ENCODE measurements at regions of chr11 and their contacts with region 1.

Region 1: GRCh38 chr11:10540923-10541560 is at the start of gene RNF141:
- DNase-seq: peak; percentile 99
- ATAC-seq: peak; percentile 91
- H3K4me3 Mint-ChIP-seq: peak within 1 kb of the TSS; percentile 90
- H3K27ac Mint-ChIP-seq: peak within 1 kb of the TSS; percentile 95
- H3K4me1 Mint-ChIP-seq: peaks cover 80% of the 10 kb centered on the region
- H3K27me3 Mint-ChIP-seq: no peaks in the 10 kb centered on the region
- CTCF ChIP-seq: no peak
- total RNA-seq, gene RNF141: 32.8 and 36.9 TPM in 2 replicates

Region 2: GRCh38 chr11:10263929-10264328 is 277.1 kb before region 1 on chr11:
- CTCF ChIA-PET with region 1: no interaction called
- POLR2A ChIA-PET with region 1: no interaction called
- intact Hi-C with region 1: no loop called
- DNase-seq: no peak
- ATAC-seq: no peak
- H3K4me3 Mint-ChIP-seq: no peak overlapping the region
- H3K27ac Mint-ChIP-seq: no peak overlapping the region
- H3K4me1 Mint-ChIP-seq: peaks cover 3% of the 10 kb centered on the region
- H3K27me3 Mint-ChIP-seq: no peaks in the 10 kb centered on the region
- CTCF ChIP-seq: no peak

Region 3: GRCh38 chr11:10450464-10451425 is 90.3 kb before region 1 on chr11:
- CTCF ChIA-PET with region 1: interaction called, 7 read pairs
- POLR2A ChIA-PET with region 1: interaction called, 37 read pairs
- intact Hi-C with region 1: no loop called
- DNase-seq: peak; percentile 64
- ATAC-seq: peak; percentile 40
- H3K4me3 Mint-ChIP-seq: peak overlapping the region; percentile 90
- H3K27ac Mint-ChIP-seq: peak overlapping the region; percentile 94
- H3K4me1 Mint-ChIP-seq: peaks cover 60% of the 10 kb centered on the region
- H3K27me3 Mint-ChIP-seq: no peaks in the 10 kb centered on the region
- CTCF ChIP-seq: no peak

Region 4: DNA sequence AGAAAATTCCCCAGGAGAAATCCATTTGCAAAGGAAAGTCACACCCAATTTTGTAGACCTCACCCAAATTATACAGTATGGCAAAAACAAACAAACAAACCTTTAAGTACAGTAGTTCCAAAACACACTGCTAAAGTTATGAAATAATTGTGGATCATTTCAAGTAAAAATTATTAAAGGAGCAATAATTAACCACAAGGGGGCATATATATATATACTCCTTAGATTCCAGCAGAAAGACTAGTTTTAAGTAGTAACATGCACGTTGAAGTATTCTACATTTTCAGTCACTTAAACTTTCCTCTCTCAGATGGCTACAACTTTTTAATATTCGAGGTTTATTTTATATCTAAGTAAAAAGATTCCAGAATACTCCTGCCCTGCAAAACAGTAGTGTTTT is 26.8 kb before region 1 on chr11:
- CTCF ChIA-PET with region 1: interaction called, 10 read pairs
- POLR2A ChIA-PET with region 1: interaction called, 8 read pairs
- intact Hi-C with region 1: no loop called
- DNase-seq: no peak
- ATAC-seq: no peak
- H3K4me3 Mint-ChIP-seq: no peak overlapping the region
- H3K27ac Mint-ChIP-seq: no peak overlapping the region
- H3K4me1 Mint-ChIP-seq: peaks cover 16% of the 10 kb centered on the region
- H3K27me3 Mint-ChIP-seq: no peaks in the 10 kb centered on the region
- CTCF ChIP-seq: no peak

Region 5: GRCh38 chr11:10573556-10573955 is 32.5 kb after region 1 on chr11:
- CTCF ChIA-PET with region 1: interaction called, 7 read pairs
- POLR2A ChIA-PET with region 1: interaction called, 3 read pairs
- intact Hi-C with region 1: loop called (anchors 5 kb)
- DNase-seq: no peak
- ATAC-seq: no peak
- H3K4me3 Mint-ChIP-seq: no peak overlapping the region
- H3K27ac Mint-ChIP-seq: no peak overlapping the region
- H3K4me1 Mint-ChIP-seq: peaks cover 64% of the 10 kb centered on the region
- H3K27me3 Mint-ChIP-seq: no peaks in the 10 kb centered on the region
- CTCF ChIP-seq: no peak

Region 6: DNA sequence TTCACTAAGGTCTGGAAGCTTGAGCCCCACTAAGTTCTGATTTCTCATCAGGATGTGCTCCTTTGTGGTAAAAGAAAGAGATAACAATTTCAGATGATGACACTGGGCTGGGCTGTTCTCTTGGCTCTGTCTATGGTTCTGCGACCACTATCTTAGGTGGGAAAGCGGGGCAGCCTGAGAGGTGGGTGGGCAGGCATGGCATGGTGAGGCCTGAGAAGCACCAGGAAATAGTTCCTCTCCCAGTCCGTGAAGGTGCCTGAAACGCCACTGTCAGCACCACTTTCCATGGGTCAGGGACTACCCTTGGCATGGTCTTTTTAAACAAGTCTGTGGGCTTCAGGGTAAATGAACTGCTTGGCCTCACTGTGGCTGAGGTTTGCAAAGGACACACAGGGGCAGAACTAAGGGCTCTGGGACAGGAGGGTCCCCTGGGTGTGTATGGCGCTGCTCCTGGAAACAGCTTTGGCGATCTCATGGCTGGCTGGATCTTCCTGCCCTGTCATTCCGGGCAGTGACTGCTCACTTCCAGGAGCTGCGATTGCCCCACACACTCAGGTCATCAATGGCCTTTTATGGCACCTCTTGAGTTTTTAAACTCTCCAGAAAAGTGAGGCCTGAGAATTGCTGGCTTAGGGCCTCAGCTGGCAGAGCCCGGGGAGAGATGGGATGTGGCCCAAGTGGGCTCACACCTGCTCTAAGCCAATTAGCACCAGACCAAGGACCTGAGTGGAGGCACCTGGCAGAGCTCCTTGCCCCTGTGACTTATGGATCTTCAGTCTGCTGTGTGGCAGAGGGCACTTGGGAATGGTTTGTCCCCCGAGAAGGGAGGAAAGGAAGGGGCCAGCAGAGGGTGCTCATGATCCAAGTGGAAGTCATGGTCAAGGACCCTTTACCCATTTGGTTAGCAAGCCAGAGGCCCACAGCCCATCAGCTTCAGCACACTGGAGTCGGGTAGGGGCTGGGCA is 83.0 kb after region 1 on chr11:
- CTCF ChIA-PET with region 1: interaction called, 5 read pairs
- POLR2A ChIA-PET with region 1: interaction called, 16 read pairs
- intact Hi-C with region 1: no loop called
- DNase-seq: no peak
- ATAC-seq: peak; percentile 9
- H3K4me3 Mint-ChIP-seq: no peak overlapping the region
- H3K27ac Mint-ChIP-seq: peak overlapping the region; percentile 95
- H3K4me1 Mint-ChIP-seq: peaks cover 77% of the 10 kb centered on the region
- H3K27me3 Mint-ChIP-seq: no peaks in the 10 kb centered on the region
- CTCF ChIP-seq: no peak

Region 7: GRCh38 chr11:10646482-10647355 is 105.7 kb after region 1 on chr11:
- CTCF ChIA-PET with region 1: interaction called, 11 read pairs
- POLR2A ChIA-PET with region 1: interaction called, 20 read pairs
- intact Hi-C with region 1: loop called (anchors 1 kb)
- DNase-seq: no peak
- ATAC-seq: no peak
- H3K4me3 Mint-ChIP-seq: no peak overlapping the region
- H3K27ac Mint-ChIP-seq: peak overlapping the region; percentile 50
- H3K4me1 Mint-ChIP-seq: peaks cover 78% of the 10 kb centered on the region
- H3K27me3 Mint-ChIP-seq: no peaks in the 10 kb centered on the region
- CTCF ChIP-seq: no peak

Region 8: DNA sequence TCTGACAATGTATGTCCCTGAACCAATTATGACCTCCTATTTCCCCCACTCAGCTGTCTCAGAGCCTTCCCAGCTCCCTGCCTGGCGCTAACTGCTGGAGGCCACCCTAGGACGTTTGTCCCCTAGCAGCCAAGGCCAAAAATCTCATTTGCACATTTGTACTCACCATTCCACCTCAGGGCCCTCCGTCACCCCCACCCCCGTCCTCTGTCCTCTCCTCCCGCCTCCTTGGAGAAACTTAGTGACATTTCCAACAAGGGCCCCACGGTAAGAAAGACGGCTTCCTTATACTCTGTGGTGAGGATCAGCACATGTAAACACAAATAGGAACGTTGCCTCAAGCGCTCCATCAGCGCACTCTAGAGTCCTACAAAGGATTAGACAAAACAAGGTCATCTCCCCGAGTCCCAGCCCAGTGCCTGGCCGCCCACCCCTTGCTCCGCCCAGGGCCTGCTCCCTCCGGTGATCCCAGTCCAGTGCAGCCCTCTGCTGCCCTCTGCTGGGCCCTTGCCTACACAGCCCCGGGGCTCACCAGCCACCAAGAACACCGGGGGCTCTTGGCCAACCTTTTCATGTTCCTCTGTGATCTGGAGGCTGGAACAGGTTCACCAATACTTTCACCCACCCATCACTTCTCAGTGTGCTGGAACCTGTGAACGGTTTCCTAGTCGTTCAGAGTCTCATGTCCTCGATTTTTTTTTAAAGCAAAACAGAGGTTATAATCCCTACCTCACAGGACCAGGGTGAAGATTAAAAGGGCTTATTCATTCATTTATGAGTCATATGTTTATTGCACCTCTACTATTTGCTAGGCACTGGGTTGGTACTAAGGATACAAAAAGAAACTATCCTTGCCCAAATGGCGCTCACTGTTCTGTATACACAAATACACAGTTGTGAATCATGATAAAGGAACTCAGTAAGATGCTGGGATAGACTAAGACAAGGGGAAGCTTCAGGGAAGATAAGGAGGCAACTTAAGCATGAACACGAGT is 194.7 kb after region 1 on chr11:
- CTCF ChIA-PET with region 1: interaction called, 6 read pairs
- POLR2A ChIA-PET with region 1: interaction called, 3 read pairs
- intact Hi-C with region 1: loop called (anchors 1 kb)
- DNase-seq: peak; percentile 93
- ATAC-seq: peak; percentile 100
- H3K4me3 Mint-ChIP-seq: peak overlapping the region; percentile 77
- H3K27ac Mint-ChIP-seq: peak overlapping the region; percentile 83
- H3K4me1 Mint-ChIP-seq: peaks cover 13% of the 10 kb centered on the region
- H3K27me3 Mint-ChIP-seq: no peaks in the 10 kb centered on the region
- CTCF ChIP-seq: peak; percentile 65

Region 9: GRCh38 chr11:11332141-11332710 is 791.2 kb after region 1 on chr11:
- CTCF ChIA-PET with region 1: no interaction called
- POLR2A ChIA-PET with region 1: no interaction called
- intact Hi-C with region 1: no loop called
- DNase-seq: no peak
- ATAC-seq: no peak
- H3K4me3 Mint-ChIP-seq: no peak overlapping the region
- H3K27ac Mint-ChIP-seq: no peak overlapping the region
- H3K4me1 Mint-ChIP-seq: no peaks in the 10 kb centered on the region
- H3K27me3 Mint-ChIP-seq: no peaks in the 10 kb centered on the region
- CTCF ChIP-seq: no peak

Measured in activated B cell treated with CpG ODN at 0.5 μM for 24 hours (primary cell).